HepG2 (cell line): ENCODE measurements at regions of chr16 and their contacts with region 1.

Region 1: GRCh38 chr16:74774203-74775116 is at the start of gene FA2H:
- DNase-seq: peak; percentile 86
- ATAC-seq: peak; percentile 99
- H3K4me3 ChIP-seq: peak within 1 kb of the TSS; percentile 45 to 77 (median 56)
- H3K27ac ChIP-seq: no peak within 1 kb of the TSS
- H3K4me1 ChIP-seq: peaks cover 22% of the 10 kb centered on the region
- H3K27me3 ChIP-seq: peaks cover 3 to 58% of the 10 kb centered on the region in 2 experiments; a peak in 4 of 5 replicates
- CTCF ChIP-seq: peak; percentile 66; the same call in 1 of the 2 replicates
- EP300 ChIP-seq: no peak
- POLR2A ChIP-seq: no peak
- RAD21 ChIP-seq: peak; percentile 91
- total RNA-seq, gene FA2H: not detected in 2 replicates

Region 2: DNA sequence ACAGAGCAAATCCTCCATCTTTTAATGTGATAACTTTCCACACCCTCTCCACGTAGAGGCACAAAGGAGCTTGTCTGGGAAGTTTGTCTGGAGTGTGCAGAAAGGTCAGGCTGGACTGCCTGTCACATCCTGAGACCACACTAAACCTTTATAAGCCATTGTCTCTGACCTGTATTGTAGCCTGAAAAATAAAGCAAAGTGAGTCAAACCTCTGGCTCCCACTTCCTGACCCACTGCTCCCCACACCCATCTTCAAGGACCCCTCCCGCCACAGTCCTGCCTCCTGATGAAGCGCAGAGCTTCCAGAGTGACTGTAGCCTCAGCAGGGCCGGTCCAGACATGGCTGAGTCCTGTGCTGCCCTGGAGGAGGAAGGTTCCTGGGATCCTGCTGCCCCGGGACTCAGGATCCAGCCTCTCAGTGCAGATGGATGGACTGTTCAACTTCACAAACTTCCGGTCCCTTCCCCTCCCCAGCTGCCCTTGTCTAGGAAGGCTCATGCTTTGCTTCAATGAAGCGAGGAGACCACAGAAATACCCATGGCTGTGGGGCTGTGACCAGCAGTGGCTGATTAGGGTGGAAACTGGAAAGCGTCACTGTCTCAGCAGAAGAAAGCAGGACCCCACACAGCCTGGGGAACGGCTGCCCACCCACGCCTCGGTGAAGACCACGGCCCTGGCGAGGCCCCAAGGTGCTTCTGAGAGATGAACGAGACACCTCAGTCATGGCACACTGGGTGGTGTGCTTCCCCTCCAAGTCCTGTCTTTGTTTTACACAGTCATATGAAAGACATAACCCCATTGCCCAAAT is 322.3 kb before region 1 on chr16:
- CTCF ChIA-PET with region 1: no interaction called
- POLR2A ChIA-PET with region 1: no interaction called
- in situ Hi-C with region 1: no loop called
- intact Hi-C with region 1: no loop called
- DNase-seq: no peak
- ATAC-seq: no peak
- H3K4me3 ChIP-seq: no peak overlapping the region
- H3K27ac ChIP-seq: no peak overlapping the region
- H3K4me1 ChIP-seq: peaks cover 34% of the 10 kb centered on the region
- H3K27me3 ChIP-seq: no peaks in the 10 kb centered on the region
- CTCF ChIP-seq: no peak
- EP300 ChIP-seq: no peak
- POLR2A ChIP-seq: no peak
- RAD21 ChIP-seq: no peak

Region 3: GRCh38 chr16:74742051-74742481 is 32.4 kb before region 1 on chr16:
- CTCF ChIA-PET with region 1: no interaction called
- POLR2A ChIA-PET with region 1: no interaction called
- in situ Hi-C with region 1: no loop called
- intact Hi-C with region 1: loop called (anchors 1 kb)
- DNase-seq: no peak
- ATAC-seq: no peak
- H3K4me3 ChIP-seq: no peak overlapping the region
- H3K27ac ChIP-seq: no peak overlapping the region
- H3K4me1 ChIP-seq: peaks cover 30% of the 10 kb centered on the region
- H3K27me3 ChIP-seq: peaks cover 5 to 54% of the 10 kb centered on the region in 2 experiments; a peak in 4 of 5 replicates
- CTCF ChIP-seq: no peak
- EP300 ChIP-seq: no peak
- POLR2A ChIP-seq: no peak
- RAD21 ChIP-seq: no peak